ENCODE measurements at regions of chr13 and their contacts with region 1.

Region 1: DNA sequence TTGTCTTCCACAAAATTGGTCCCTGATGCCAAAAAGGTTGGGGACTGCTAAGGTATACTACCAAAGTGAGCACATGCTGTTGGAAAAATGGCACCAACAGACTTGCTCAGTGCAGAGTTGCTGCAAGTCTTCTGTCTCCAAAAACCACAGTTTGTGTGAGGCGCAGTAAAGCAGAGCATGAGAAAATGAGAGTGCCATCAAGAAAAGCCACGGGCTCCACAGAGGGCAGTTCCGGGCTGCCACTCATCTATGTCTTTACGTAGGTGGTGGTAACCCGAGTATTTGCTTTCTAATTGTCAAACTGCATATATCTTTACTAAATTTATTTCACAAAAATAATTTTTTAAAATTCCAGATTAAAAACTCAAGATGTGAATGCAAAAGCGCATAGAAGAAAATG is 123.8 kb downstream of the RNF17 start:
- DNase-seq: no peak
- ATAC-seq: peak; percentile 82
- H3K4me3 Mint-ChIP-seq: no peak overlapping the region
- H3K27ac Mint-ChIP-seq: no peak overlapping the region
- H3K4me1 Mint-ChIP-seq: peaks cover 17% of the 10 kb centered on the region
- H3K27me3 Mint-ChIP-seq: no peaks in the 10 kb centered on the region
- CTCF ChIP-seq: no peak

Region 2: GRCh38 chr13:24922745-24923591 is 35.2 kb after region 1 on chr13:
- CTCF ChIA-PET with region 1: no interaction called
- POLR2A ChIA-PET with region 1: no interaction called
- intact Hi-C with region 1: loop called (anchors 5 kb)
- DNase-seq: peak; percentile 91
- ATAC-seq: peak; percentile 97
- H3K4me3 Mint-ChIP-seq: peak overlapping the region; percentile 91
- H3K27ac Mint-ChIP-seq: peak overlapping the region; percentile 97
- H3K4me1 Mint-ChIP-seq: peaks cover 16% of the 10 kb centered on the region
- H3K27me3 Mint-ChIP-seq: no peaks in the 10 kb centered on the region
- CTCF ChIP-seq: no peak

Region 3: GRCh38 chr13:24943136-24943535 is 55.4 kb after region 1 on chr13:
- CTCF ChIA-PET with region 1: no interaction called
- POLR2A ChIA-PET with region 1: no interaction called
- intact Hi-C with region 1: loop called (anchors 10 kb)
- DNase-seq: no peak
- ATAC-seq: no peak
- H3K4me3 Mint-ChIP-seq: no peak overlapping the region
- H3K27ac Mint-ChIP-seq: no peak overlapping the region
- H3K4me1 Mint-ChIP-seq: peaks cover 5% of the 10 kb centered on the region
- H3K27me3 Mint-ChIP-seq: peaks cover 19% of the 10 kb centered on the region
- CTCF ChIP-seq: no peak

Region 4: GRCh38 chr13:25095862-25096453 is 208.2 kb after region 1 on chr13 and contains the start of gene PABPC3:
- CTCF ChIA-PET with region 1: no interaction called
- POLR2A ChIA-PET with region 1: no interaction called
- intact Hi-C with region 1: no loop called
- DNase-seq: no peak
- ATAC-seq: no peak
- H3K4me3 Mint-ChIP-seq: peak within 1 kb of the TSS; percentile 28
- H3K27ac Mint-ChIP-seq: no peak within 1 kb of the TSS
- H3K4me1 Mint-ChIP-seq: peaks cover 3% of the 10 kb centered on the region
- H3K27me3 Mint-ChIP-seq: peaks cover 37% of the 10 kb centered on the region
- CTCF ChIP-seq: no peak
- total RNA-seq, gene PABPC3: 0.35 and 0.46 TPM in 2 replicates

Region 5: GRCh38 chr13:25137637-25138115 is 249.9 kb after region 1 on chr13:
- CTCF ChIA-PET with region 1: no interaction called
- POLR2A ChIA-PET with region 1: no interaction called
- intact Hi-C with region 1: no loop called
- DNase-seq: no peak
- ATAC-seq: no peak
- H3K4me3 Mint-ChIP-seq: no peak overlapping the region
- H3K27ac Mint-ChIP-seq: no peak overlapping the region
- H3K4me1 Mint-ChIP-seq: no peaks in the 10 kb centered on the region
- H3K27me3 Mint-ChIP-seq: peaks cover 40% of the 10 kb centered on the region
- CTCF ChIP-seq: no peak